Left cardiac atrium (tissue), 4 donors: ENCODE measurements at regions of chr7 and their contacts with region 1.

Region 1: DNA sequence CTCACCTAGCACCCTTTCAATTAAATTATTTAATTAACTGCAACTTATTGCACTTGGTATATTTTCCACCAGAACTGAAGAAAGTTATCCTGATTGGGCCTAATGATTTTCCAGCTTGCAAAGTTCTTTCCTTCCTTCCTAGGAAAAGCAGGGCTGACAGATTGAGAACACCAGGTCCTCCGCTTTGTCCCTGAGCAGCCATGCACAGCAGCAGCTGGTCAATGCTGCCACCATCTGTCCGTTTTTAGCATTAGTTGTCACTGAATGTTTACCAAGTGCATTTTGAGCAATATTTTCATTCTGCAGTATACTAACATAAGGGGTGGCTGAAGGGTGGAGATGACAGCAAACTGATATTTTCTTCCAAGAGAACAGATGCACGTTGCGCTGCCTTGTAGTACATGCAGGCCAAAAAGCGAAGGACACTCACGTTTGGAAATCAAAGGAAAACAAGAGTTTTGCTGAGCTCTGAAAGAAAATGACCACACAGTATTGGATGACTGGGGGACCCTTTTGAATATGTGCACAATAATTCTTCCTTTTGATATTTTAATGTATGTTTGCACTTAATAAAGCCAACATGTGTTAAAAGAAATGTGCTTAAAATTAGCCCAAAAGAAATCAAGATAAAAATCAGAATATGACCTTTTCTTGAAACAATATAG is 248.8 kb upstream of the PTN start:
- DNase-seq: peak; percentile 55
- ATAC-seq: peak; percentile 92 to 96

Region 2: DNA sequence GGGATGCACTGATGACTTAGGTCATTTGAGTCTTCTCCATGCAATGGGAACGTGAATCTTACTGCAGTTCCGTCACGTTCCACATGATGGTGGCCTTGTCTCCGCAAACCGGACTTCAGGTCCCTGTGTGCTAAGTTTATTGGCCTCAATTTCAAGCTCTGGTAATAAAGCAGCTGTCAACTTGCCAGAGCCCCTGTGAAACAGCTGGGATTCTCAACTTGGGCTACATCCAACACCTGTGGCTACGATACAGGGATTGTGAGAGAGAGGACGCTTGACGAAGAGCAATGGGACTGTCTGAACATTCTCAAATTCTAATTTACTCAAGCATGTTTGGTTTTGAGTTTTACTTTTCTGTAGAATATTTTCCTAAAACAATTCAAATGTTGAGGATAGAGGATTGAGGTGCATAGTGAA is 423.1 kb before region 1 on chr7:
- intact Hi-C with region 1: loop called (anchors 2 to 10 kb)
- DNase-seq: peak; percentile 60
- ATAC-seq: peak; percentile 83 to 84

Region 3: GRCh38 chr7:137454246-137454724 is 138.1 kb before region 1 on chr7:
- intact Hi-C with region 1: loop called in 1 of 2 experiments (anchors 5 kb)
- DNase-seq: no peak
- ATAC-seq: peak; percentile 47 to 72